A549 (cell line): ENCODE measurements at regions of chr12 and their contacts with region 1.

Region 1: DNA sequence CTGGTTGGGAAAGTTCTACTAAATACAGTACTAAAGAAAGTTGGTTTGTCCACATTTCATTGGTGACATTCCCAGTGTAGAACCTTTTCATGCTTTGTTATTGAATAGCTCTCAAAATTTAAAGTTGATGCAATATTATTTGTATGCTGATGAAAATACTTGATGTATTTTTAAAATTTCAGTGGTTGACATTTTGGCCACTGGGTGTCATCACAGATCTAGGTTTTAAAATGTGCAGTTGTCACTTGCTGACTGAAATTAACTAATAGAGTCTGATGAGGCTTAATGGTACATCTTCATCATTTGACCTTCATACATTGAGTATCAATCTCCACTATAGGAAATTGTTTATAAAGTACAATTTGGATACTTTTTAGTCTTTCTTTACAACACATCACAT is 37.1 kb downstream of the CMAS start:
- DNase-seq: peak in 1 of 2 experiments; percentile 36
- ATAC-seq: peak in 1 of 2 experiments; percentile 55; a peak in 3 of 6 replicates
- H3K4me3 ChIP-seq: no peak overlapping the region
- H3K27ac ChIP-seq: no peak overlapping the region
- H3K4me1 ChIP-seq: no peaks in the 10 kb centered on the region
- CTCF ChIP-seq: peak; percentile 76
- EP300 ChIP-seq: no peak
- POLR2A ChIP-seq: no peak
- RAD21 ChIP-seq: peak; percentile 78 to 85

Region 2: GRCh38 chr12:22334410-22335290 is 251.5 kb after region 1 on chr12 and contains the start of gene ST8SIA1:
- CTCF ChIA-PET with region 1: interaction called, 17 read pairs
- POLR2A ChIA-PET with region 1: no interaction called
- DNase-seq: peak in 1 of 2 experiments; percentile 36
- ATAC-seq: peak; percentile 55 to 59
- H3K4me3 ChIP-seq: peak within 1 kb of the TSS; percentile 57
- H3K27ac ChIP-seq: peak within 1 kb of the TSS; percentile 39 to 72
- H3K4me1 ChIP-seq: peaks cover 8% of the 10 kb centered on the region; the same call in 1 of the 3 replicates
- CTCF ChIP-seq: no peak
- EP300 ChIP-seq: no peak
- POLR2A ChIP-seq: no peak
- RAD21 ChIP-seq: no peak
- polyA plus RNA-seq, gene ST8SIA1: 1.1 and 1.6 TPM in 2 replicates

Region 3: GRCh38 chr12:22443379-22444316 is 360.5 kb after region 1 on chr12:
- CTCF ChIA-PET with region 1: interaction called, 17 read pairs
- POLR2A ChIA-PET with region 1: interaction called, 4 read pairs
- DNase-seq: peak; percentile 51 to 89
- ATAC-seq: peak; percentile 100
- H3K4me3 ChIP-seq: no peak overlapping the region
- H3K27ac ChIP-seq: no peak overlapping the region
- H3K4me1 ChIP-seq: no peaks in the 10 kb centered on the region
- CTCF ChIP-seq: peak; percentile 88
- EP300 ChIP-seq: no peak
- POLR2A ChIP-seq: no peak
- RAD21 ChIP-seq: peak; percentile 90 to 94

Region 4: DNA sequence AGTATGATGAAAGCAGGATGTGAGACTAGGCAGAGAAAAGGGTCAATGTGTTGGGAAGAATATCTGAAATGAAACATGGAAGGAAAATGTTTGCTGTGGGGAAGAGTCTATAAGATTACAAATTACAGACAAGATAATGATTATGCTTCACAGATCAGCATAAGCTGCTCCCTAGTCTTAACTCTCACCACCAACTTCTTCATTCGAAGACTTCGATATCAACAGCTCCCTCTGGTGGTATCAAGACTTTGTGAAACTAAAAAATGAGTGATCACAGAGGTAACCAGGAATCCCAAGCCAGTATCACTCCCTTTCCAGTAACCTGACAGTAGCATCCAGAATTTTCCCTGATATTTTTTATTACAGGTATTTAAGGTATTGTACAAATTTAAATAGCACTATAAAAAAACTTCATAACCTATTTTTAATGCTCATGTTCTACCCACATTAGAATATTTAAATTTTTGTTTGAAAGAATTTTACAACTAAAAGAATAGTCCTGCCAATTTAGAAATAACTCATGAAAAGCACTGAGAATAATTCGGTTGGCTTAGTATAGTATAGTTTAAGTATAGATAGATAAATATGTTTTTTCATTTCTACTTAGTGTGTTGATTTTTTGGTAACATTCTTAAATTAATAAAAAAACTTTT is 376.8 kb after region 1 on chr12:
- CTCF ChIA-PET with region 1: interaction called, 10 read pairs
- POLR2A ChIA-PET with region 1: no interaction called
- DNase-seq: peak; percentile 23 to 64
- ATAC-seq: peak; percentile 50 to 85; a peak in 4 of 6 replicates
- H3K4me3 ChIP-seq: no peak overlapping the region
- H3K27ac ChIP-seq: no peak overlapping the region
- H3K4me1 ChIP-seq: no peaks in the 10 kb centered on the region
- CTCF ChIP-seq: peak; percentile 76
- EP300 ChIP-seq: no peak
- POLR2A ChIP-seq: no peak
- RAD21 ChIP-seq: peak; percentile 41 to 42